PC-9 (cell line): ENCODE measurements at regions of chr4 and their contacts with region 1.

Region 1: DNA sequence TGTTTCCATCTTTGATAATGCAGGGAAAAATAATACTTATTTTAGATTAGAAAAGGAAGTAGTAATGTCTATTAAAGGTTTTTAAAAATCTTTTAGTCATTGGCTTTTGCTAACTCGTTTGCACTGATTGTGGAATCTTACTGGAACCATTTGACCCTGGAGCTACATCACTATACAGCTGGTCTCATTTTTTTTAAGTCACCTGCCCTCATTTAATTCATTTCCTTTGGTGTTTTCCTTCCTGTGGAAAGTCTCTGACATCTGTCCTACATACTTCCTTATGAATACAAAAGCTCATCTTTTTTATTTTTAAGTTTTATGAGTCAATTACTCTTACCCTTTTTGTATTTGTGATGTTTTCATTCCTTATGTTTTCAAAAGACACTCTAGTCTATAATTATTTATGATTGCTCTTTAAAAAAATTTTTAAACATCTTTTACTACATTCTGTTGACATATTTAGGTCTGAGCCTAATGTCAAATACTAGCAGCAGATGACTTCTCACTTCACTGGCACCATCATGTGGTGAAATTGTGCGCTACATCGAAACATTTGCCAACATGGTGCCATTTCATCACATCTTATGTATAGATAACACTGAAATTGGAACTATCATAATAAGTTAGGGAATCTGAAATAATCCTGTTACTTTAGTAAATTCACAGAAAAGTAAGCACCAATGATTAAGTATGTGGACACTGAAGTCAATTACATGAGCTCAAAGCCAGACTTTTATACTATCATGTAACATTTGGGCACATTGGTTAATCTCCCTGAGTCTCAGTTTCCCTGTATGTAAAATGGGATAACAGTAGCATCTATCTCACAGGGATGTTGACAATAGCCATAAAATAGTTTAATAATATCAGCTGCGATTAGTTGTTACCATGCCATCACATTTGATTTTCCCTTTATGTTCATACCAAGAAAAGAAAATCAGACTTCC is 9.4 kb upstream of the MMAA start:
- DNase-seq: peak; percentile 44 to 64
- H3K4me3 ChIP-seq: no peak overlapping the region
- H3K27ac ChIP-seq: no peak overlapping the region
- H3K4me1 ChIP-seq: no peaks in the 10 kb centered on the region
- H3K27me3 ChIP-seq: no peaks in the 10 kb centered on the region
- CTCF ChIP-seq: peak; percentile 80

Region 2: DNA sequence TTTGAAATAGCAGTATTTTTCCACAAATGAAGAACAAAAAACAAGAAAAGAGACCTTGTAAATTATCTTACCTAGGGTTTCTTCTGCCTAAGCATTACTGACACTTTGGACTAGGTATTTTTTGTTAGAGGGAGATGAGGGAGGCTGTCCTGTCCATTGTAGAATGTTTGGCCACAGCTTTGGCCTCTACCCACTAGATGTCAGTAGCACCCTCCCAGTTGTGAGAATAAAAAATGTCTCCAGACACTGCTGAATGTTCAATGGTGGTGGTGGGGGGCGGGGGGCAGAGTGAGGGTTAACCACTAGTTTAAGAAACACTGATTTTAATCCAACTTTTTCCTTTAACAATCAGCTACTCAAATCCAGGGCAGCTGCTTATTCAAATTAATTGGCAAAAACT is 455.2 kb before region 1 on chr4:
- CTCF ChIA-PET with region 1: no interaction called
- POLR2A ChIA-PET with region 1: no interaction called
- intact Hi-C with region 1: loop called (anchors 2 kb)
- DNase-seq: no peak
- H3K4me3 ChIP-seq: no peak overlapping the region
- H3K27ac ChIP-seq: no peak overlapping the region
- H3K4me1 ChIP-seq: no peaks in the 10 kb centered on the region
- H3K27me3 ChIP-seq: no peaks in the 10 kb centered on the region
- CTCF ChIP-seq: 0 out of 2 replicates have a peak, but pooled peaks have one; percentile 31

Region 3: GRCh38 chr4:145216535-145216934 is 393.2 kb before region 1 on chr4:
- CTCF ChIA-PET with region 1: interaction called, 7 read pairs
- POLR2A ChIA-PET with region 1: no interaction called
- intact Hi-C with region 1: loop called (anchors 1 kb)
- DNase-seq: no peak
- H3K4me3 ChIP-seq: no peak overlapping the region
- H3K27ac ChIP-seq: no peak overlapping the region
- H3K4me1 ChIP-seq: no peaks in the 10 kb centered on the region
- H3K27me3 ChIP-seq: no peaks in the 10 kb centered on the region
- CTCF ChIP-seq: peak; percentile 67

Region 4: GRCh38 chr4:145234091-145234706 is 375.6 kb before region 1 on chr4:
- CTCF ChIA-PET with region 1: no interaction called
- POLR2A ChIA-PET with region 1: no interaction called
- intact Hi-C with region 1: loop called (anchors 1 kb)
- DNase-seq: peak; percentile 45 to 53
- H3K4me3 ChIP-seq: no peak overlapping the region
- H3K27ac ChIP-seq: no peak overlapping the region
- H3K4me1 ChIP-seq: no peaks in the 10 kb centered on the region
- H3K27me3 ChIP-seq: no peaks in the 10 kb centered on the region
- CTCF ChIP-seq: peak; percentile 81

Region 5: DNA sequence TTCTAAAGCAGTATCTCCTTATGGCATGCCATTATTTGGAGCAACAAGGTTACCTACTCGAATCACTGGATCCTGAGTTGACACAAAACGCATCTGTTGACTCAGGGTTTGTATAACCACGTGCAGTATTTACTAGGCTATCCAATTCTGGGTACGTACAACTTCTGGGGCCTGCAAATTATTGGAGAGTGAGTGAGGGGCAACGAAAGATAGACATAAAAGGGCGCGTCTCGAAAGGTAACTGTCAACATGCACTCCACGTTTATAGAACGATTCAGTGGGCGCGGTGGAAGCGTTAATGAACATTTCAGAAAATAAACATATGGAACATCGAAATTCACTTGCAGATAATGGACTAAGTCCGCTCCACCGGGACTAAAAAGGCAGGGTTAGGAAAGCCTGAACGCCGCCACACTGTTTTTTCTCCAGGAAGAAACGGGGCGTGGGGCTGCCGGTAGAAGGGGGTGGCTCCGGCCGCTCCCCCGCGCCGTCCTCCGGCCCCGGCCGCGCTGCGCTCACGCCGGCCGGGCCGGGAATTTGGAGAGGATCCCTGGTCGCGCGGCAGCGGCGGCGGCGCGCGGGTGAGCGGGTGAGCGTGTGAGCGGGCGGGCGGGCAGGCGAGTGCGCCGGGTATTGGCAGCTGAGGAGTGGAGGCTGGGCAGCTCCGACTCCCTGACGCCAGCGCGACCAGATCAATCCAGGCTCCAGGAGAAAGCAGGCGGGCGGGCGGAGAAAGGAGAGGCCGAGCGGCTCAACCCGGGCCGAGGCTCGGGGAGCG is 128.4 kb before region 1 on chr4 and contains the start of gene SMAD1:
- CTCF ChIA-PET with region 1: no interaction called
- POLR2A ChIA-PET with region 1: no interaction called
- intact Hi-C with region 1: loop called (anchors 2 kb)
- DNase-seq: peak; percentile 38 to 74
- H3K4me3 ChIP-seq: peak within 1 kb of the TSS; percentile 86
- H3K27ac ChIP-seq: peak within 1 kb of the TSS; percentile 71
- H3K4me1 ChIP-seq: peaks cover 22% of the 10 kb centered on the region
- H3K27me3 ChIP-seq: no peaks in the 10 kb centered on the region
- CTCF ChIP-seq: no peak
- total RNA-seq, gene SMAD1: 15.1 and 16.1 TPM in 2 replicates

Region 6: DNA sequence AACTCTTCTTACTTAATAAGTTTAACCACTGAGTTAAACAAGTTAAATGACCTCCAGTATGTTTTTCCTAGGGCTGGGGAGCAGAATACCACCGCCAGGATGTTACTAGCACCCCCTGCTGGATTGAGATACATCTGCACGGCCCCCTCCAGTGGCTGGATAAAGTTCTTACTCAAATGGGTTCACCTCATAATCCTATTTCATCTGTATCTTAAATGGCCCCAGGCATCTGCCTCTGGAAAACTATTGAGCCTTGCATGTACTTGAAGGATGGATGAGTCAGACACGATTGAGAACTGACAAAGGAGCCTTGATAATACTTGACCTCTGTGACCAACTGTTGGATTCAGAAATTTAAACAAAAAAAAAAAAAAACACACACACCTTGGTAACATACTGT is 52.0 kb before region 1 on chr4:
- CTCF ChIA-PET with region 1: interaction called, 15 read pairs
- POLR2A ChIA-PET with region 1: no interaction called
- intact Hi-C with region 1: no loop called
- DNase-seq: peak; percentile 31 to 45
- H3K4me3 ChIP-seq: no peak overlapping the region
- H3K27ac ChIP-seq: no peak overlapping the region
- H3K4me1 ChIP-seq: peaks cover 15% of the 10 kb centered on the region
- H3K27me3 ChIP-seq: no peaks in the 10 kb centered on the region
- CTCF ChIP-seq: peak; percentile 62

Region 7: GRCh38 chr4:146742416-146742815 is 1132.7 kb after region 1 on chr4:
- CTCF ChIA-PET with region 1: no interaction called
- POLR2A ChIA-PET with region 1: no interaction called
- intact Hi-C with region 1: no loop called
- DNase-seq: no peak
- H3K4me3 ChIP-seq: no peak overlapping the region
- H3K27ac ChIP-seq: no peak overlapping the region
- H3K4me1 ChIP-seq: no peaks in the 10 kb centered on the region
- H3K27me3 ChIP-seq: no peaks in the 10 kb centered on the region
- CTCF ChIP-seq: no peak

Region 8: GRCh38 chr4:147096667-147097604 is 1487.2 kb after region 1 on chr4:
- CTCF ChIA-PET with region 1: no interaction called
- POLR2A ChIA-PET with region 1: no interaction called
- intact Hi-C with region 1: loop called (anchors 5 kb)
- DNase-seq: peak in 1 of 2 experiments; percentile 36
- H3K4me3 ChIP-seq: no peak overlapping the region
- H3K27ac ChIP-seq: no peak overlapping the region
- H3K4me1 ChIP-seq: no peaks in the 10 kb centered on the region
- H3K27me3 ChIP-seq: no peaks in the 10 kb centered on the region
- CTCF ChIP-seq: peak; percentile 78